Activated B cell treated with CpG ODN at 0.5 μM for 24 hours (primary cell): ENCODE measurements at regions of chr17 and their contacts with region 1.

Region 1: GRCh38 chr17:42548070-42548837 is 4.5 kb upstream of the HSD17B1 start:
- DNase-seq: peak; percentile 81
- ATAC-seq: peak; percentile 97
- H3K4me3 Mint-ChIP-seq: peak overlapping the region; percentile 66
- H3K27ac Mint-ChIP-seq: no peak overlapping the region
- H3K4me1 Mint-ChIP-seq: peaks cover 17% of the 10 kb centered on the region
- H3K27me3 Mint-ChIP-seq: no peaks in the 10 kb centered on the region
- CTCF ChIP-seq: no peak

Region 2: GRCh38 chr17:42536048-42536371 is 12.2 kb before region 1 on chr17 and contains the start of gene NAGLU:
- CTCF ChIA-PET with region 1: interaction called, 5 read pairs
- POLR2A ChIA-PET with region 1: interaction called, 26 read pairs
- intact Hi-C with region 1: no loop called
- DNase-seq: peak; percentile 95
- ATAC-seq: peak; percentile 94
- H3K4me3 Mint-ChIP-seq: peak within 1 kb of the TSS; percentile 89
- H3K27ac Mint-ChIP-seq: peak within 1 kb of the TSS; percentile 83
- H3K4me1 Mint-ChIP-seq: peaks cover 34% of the 10 kb centered on the region
- H3K27me3 Mint-ChIP-seq: no peaks in the 10 kb centered on the region
- CTCF ChIP-seq: no peak
- total RNA-seq, gene NAGLU: 27.8 and 33.9 TPM in 2 replicates

Region 3: GRCh38 chr17:42566883-42567573 is 18.8 kb after region 1 on chr17 and contains the start of gene MLX:
- CTCF ChIA-PET with region 1: interaction called, 4 read pairs
- POLR2A ChIA-PET with region 1: interaction called, 23 read pairs
- intact Hi-C with region 1: no loop called
- DNase-seq: peak; percentile 90
- ATAC-seq: peak; percentile 83
- H3K4me3 Mint-ChIP-seq: peak within 1 kb of the TSS; percentile 98
- H3K27ac Mint-ChIP-seq: peak within 1 kb of the TSS; percentile 95
- H3K4me1 Mint-ChIP-seq: peaks cover 35% of the 10 kb centered on the region
- H3K27me3 Mint-ChIP-seq: no peaks in the 10 kb centered on the region
- CTCF ChIP-seq: no peak
- total RNA-seq, gene MLX: 53.4 and 59.7 TPM in 2 replicates